Cardiac septum (tissue), 1 donor: ENCODE measurements at regions of chr11 and their contacts with region 1.

Region 1: DNA sequence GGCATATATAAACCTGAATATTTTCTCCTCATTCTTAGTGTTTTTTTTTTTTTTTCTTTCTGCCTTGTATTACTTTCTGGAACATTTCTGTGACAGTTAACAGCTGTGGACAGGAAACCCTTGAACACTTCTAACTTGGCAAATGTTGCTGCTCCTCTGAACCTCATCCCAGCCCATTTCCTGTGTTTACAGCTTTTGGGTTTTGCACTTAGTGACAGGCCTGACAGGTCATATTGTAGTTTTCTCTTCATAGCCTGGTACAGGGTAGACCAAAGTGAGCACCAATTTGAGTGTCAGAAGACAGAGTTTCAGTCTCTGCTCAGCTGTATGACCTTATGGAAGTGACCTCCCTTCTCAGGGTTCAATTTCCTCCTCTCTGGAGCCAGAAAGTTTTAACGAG is 91.6 kb downstream of the STIM1 start:
- DNase-seq: no peak

Region 2: DNA sequence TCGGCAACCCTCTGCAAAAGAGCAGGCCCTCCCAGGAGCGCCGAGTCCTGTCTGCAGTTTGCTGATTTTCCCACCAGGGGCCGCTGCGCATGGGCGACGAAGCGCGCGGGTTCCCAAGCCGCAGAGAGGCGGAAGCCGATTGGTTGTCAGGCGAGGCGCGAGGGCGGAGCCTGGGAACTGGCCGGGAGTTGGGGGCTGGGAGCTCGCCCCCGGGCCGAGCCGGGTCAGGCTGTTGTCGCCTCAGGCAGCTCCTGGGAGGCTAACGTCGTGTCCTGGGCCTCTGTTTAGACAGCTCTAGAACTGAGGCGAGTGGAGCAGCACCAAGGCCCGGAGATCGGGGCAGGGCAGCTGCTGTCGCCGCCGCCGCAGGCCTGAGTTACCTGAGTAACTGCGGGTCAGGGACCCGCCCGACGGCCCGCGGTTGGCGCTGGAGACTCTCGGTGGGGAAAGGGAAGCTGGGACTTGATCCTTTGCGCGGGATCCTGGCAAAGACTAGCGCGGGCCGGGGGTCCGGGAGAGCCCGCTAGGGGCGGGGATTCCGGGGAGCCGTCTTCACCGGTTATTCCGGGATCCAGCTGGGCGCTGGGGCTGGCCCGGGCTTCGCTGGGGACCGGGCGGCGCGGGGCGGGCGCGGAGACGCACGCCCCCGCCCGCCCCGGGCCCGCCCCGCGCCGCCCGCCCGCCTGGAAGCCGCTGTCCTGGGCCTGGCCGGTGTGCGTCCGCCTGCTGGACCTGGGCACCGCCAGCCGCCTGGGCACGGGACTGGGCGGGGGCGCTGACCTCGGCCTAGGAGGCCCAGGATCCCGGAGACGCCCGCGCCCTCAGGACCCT is 91.9 kb before region 1 on chr11 and contains the start of gene STIM1:
- intact Hi-C with region 1: loop called (anchors 5 kb)
- DNase-seq: peak; percentile 98
- total RNA-seq, gene STIM1: 40.4 TPM